SK-N-SH (cell line): ENCODE measurements at regions of chr20 and their contacts with region 1.

Region 1: DNA sequence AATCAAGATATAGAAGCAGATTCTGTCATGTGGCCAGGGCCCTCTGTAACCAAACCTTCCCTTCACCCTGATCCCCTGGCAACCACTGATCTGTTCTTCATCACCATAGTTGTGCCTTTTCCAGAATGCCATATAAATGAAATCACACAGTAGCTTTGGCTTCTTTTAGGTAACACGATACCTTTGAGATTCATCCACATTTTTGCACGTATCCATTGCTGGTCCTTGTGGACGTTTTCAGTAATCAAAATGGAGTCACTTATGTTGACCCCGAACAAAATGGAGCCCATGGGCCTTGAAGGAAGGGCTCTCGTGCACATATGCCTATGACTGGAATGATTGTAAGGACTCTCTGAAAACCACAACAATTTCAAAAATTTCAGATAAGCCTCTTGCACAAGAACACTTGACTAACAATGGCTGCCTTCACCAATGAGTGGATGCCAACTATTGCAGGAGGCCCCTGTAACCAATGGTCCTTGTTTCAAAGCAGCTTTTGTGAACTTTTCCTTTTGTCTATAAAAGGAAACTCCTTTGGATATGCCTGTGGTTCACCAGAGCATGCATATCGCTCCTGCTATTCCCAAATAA is 84.3 kb upstream of the RALY start:
- DNase-seq: no peak
- H3K4me3 ChIP-seq: no peak overlapping the region
- H3K27ac ChIP-seq: no peak overlapping the region
- H3K4me1 ChIP-seq: peaks cover 5 to 11% of the 10 kb centered on the region in 2 experiments; a peak in 2 of 4 replicates
- H3K27me3 ChIP-seq: no peaks in the 10 kb centered on the region
- CTCF ChIP-seq: no peak
- EP300 ChIP-seq: peak in 1 of 2 experiments; percentile 56; a peak in 1 of 4 replicates
- RAD21 ChIP-seq: no peak

Region 2: DNA sequence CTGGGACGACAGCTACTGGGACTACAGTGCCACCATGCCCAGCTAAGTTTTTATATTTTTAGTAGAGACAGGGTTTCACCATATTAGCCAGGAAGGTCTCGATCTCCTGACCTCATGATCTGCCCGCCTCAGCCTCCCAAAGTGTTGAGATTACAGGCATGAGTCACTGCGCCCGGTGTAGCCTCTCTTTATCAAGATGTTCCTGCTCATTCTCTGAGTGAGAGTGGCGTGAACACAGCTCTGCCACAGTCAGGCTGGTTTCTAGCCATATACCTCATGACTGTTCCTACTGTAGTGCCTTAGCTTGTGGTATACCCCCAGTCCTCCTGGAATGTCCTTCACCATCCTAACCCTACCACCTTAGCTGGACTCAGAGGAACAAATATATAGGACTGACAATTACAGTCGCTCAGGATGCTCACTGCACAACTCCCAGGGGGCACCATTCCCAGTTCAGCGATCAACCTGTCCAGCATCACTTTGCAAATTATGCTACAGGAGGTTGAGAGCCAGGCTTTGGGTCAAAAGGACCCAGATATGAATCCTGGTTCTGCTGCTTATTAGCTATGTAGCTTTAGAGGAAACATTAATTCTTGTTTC is 12.0 kb before region 1 on chr20:
- CTCF ChIA-PET with region 1: interaction called, 10 read pairs
- POLR2A ChIA-PET with region 1: no interaction called
- DNase-seq: peak; percentile 34
- H3K4me3 ChIP-seq: no peak overlapping the region
- H3K27ac ChIP-seq: no peak overlapping the region
- H3K4me1 ChIP-seq: no peaks in the 10 kb centered on the region
- H3K27me3 ChIP-seq: no peaks in the 10 kb centered on the region
- CTCF ChIP-seq: peak; percentile 49
- EP300 ChIP-seq: no peak
- RAD21 ChIP-seq: peak; percentile 44